PC-9 (cell line): ENCODE measurements at regions of chr1 and their contacts with region 1.

Region 1: DNA sequence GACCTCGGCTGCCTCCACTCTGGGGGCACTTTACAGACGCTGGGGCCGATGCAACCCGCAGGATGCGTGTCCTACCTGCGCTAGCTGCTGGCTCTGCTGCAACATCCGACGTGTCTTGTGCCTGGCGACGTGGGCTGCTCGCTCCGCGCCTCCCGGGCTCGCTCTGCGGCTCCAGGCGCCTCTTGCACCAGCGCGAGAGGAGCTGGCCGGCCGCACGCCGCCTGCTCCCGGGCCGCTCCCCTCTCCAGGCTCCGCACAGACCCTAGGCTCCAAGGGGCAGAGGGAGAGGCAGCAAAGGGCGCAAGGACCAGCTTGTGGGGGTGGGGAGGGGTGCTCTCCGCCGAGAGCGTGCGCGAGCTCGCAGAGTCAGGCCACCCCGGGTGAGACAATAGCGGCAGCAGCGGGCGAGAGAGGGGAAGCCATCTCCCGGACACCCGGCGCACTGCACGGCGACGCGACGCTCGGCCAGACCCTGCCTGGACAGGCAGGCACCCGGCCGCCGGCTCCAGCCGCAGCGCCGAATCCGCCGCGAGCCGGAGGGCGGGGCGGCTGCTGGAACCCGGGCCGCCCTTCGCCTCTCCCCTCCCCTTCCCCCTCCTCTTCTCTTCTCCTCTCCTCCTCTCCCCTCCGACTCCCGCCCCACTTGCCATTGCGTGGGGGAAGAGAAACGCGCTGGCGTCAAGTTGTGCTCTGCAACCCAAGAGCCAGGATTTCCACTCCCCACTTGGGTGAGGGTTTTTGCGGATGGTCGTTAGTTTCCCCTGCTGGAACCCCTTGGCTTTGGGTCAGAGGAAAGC is at the start of gene PIK3C2B:
- DNase-seq: peak; percentile 80 to 84
- H3K4me3 ChIP-seq: peak within 1 kb of the TSS; percentile 94
- H3K27ac ChIP-seq: peak within 1 kb of the TSS; percentile 92
- H3K4me1 ChIP-seq: peaks cover 34% of the 10 kb centered on the region
- H3K27me3 ChIP-seq: no peaks in the 10 kb centered on the region
- CTCF ChIP-seq: peak; percentile 55; the same call in 1 of the 2 replicates
- total RNA-seq, gene PIK3C2B: 51.6 and 52.4 TPM in 2 replicates

Region 2: DNA sequence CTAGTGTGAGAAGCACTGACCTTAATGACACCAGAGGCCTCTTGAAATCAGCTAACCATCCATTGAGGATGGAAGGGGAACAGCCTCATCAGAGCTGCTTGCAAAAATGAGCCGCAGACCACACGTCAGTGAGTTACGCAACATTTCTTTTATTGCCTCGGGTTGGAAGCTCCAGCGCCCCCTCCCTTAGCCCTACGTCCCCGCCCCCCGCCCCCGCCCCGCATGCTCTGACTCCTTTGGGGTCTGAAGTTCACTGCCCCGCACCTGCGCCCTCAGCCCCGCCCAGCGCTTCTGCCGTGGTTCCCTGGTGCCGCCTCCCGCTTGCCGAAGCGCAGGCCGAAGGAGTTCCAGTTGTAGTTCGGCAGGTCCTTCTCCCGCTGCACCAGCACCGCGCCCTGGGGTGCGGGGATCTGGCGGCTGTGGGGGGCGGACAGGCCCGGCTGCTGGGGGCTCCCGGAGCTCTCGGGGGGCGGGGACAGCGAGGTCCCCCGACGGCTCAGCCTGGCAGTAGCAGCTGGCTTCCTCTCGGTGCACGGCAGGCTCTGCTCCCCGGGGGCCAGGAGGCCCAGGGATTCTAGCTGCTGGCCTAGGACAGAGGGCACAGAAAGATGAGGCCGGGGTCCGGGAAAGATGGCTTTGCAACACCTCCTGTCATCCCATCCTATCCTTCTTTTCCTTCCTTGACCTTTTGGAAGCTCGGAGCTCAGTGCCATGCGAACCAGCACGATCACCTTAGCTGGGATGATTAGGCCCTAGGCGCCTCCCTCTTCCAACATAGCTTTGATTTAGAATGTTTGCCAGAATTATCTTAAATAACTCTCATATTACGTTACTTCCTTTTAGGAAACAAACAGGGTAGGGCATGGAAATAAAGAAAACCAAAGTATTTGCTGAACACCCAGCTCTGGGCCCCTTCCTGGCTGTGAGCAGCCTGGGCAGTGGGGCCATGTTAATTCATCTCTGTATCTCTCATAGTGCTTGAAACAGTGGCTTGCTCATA is 304.0 kb before region 1 on chr1:
- CTCF ChIA-PET with region 1: no interaction called
- POLR2A ChIA-PET with region 1: no interaction called
- intact Hi-C with region 1: no loop called
- DNase-seq: peak in 1 of 2 experiments; percentile 52
- H3K4me3 ChIP-seq: no peak overlapping the region
- H3K27ac ChIP-seq: no peak overlapping the region
- H3K4me1 ChIP-seq: peaks cover 20% of the 10 kb centered on the region
- H3K27me3 ChIP-seq: no peaks in the 10 kb centered on the region
- CTCF ChIP-seq: no peak

Region 3: DNA sequence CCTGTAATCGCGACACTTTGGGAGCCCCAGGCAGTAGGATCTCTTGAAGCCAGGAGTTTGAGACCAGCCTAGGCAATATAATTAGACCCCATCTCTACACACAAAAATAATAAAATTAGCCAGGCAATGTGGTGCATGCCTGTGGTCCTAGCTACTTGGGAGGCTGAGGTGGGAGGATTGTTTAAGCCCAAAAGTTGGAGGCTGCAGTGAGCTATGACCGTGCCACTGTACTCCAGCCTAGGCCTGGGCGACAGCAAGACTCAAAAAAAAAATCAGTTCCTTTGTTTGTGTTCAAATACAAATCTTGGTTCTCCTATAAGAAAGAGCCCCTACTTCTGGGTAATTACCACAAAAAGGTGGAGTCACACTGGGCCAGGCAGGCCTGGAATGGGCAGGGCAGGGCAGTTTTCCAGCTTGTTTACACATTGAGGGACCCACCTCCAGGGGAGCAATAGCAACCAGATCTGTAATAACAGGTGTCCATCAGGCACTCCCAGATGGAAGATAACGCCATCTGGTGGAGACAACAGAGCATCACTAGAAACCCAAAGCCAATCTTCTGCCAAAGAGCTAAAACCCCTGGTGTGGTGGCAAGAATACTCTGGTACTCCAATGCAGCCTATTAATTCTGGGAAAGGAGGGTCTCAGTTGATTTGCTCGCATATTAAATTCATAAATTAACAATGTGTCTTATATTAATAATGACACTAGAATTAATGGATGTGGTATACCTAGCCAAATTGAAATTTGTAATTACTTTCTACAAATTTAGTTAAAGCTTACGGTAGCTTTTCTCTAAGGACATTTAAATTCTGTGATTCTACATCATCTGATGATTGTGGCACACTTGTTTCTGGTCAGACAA is 96.0 kb before region 1 on chr1:
- CTCF ChIA-PET with region 1: interaction called, 10 read pairs
- POLR2A ChIA-PET with region 1: interaction called, 3 read pairs
- intact Hi-C with region 1: no loop called
- DNase-seq: peak; percentile 88 to 92
- H3K4me3 ChIP-seq: no peak overlapping the region
- H3K27ac ChIP-seq: no peak overlapping the region
- H3K4me1 ChIP-seq: 0 out of 2 replicates have a peak, but pooled peaks cover 5% of the 10 kb centered on the region
- H3K27me3 ChIP-seq: no peaks in the 10 kb centered on the region
- CTCF ChIP-seq: peak; percentile 87

Region 4: GRCh38 chr1:204417231-204417997 is 77.1 kb before region 1 on chr1:
- CTCF ChIA-PET with region 1: interaction called, 4 read pairs
- POLR2A ChIA-PET with region 1: interaction called, 16 read pairs
- intact Hi-C with region 1: no loop called
- DNase-seq: peak; percentile 77 to 96
- H3K4me3 ChIP-seq: peak overlapping the region; percentile 51
- H3K27ac ChIP-seq: peak overlapping the region; percentile 98
- H3K4me1 ChIP-seq: peaks cover 73% of the 10 kb centered on the region
- H3K27me3 ChIP-seq: no peaks in the 10 kb centered on the region
- CTCF ChIP-seq: no peak

Region 5: DNA sequence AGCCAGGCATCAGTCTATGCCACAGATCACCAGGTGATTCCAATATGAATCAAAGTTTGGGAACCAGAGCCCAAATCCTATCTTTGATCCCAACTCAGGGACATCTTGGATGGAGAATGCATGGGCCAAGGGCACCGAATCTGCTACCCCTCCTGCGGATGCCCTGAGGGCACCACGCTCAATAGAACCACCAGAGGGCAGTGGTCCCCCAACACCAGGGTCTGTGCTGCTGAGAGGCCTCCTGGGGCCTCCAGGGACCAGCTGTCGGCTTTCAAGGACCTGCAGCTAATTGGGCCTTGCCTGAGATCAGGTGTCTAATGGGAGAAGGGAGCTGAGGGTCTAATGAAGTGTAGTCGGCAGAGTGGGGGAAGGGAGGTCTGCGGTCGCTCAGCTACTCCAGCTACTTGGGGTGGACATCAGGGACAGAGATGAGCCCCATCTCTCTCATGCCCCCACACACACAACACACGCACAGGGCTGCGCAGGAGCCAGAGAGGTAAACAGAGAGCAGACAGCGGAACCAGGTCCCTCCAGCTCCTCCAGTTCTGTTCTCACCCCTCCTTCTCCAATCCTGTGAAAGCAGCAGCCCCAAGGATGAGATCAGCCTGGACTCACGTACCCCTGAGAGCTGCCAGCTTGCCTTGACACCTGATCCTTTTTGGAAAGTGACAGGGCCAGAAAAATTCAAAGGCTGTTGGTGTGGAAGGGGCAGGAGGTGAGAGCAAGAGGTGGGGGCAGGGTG is 47.9 kb before region 1 on chr1:
- CTCF ChIA-PET with region 1: interaction called, 27 read pairs
- POLR2A ChIA-PET with region 1: interaction called, 25 read pairs
- intact Hi-C with region 1: loop called (anchors 1 kb)
- DNase-seq: peak in 1 of 2 experiments; percentile 34
- H3K4me3 ChIP-seq: no peak overlapping the region
- H3K27ac ChIP-seq: no peak overlapping the region
- H3K4me1 ChIP-seq: peaks cover 73% of the 10 kb centered on the region
- H3K27me3 ChIP-seq: no peaks in the 10 kb centered on the region
- CTCF ChIP-seq: peak; percentile 57

Region 6: GRCh38 chr1:204480515-204480914 is 14.0 kb before region 1 on chr1:
- CTCF ChIA-PET with region 1: interaction called, 4 read pairs
- POLR2A ChIA-PET with region 1: interaction called, 23 read pairs
- intact Hi-C with region 1: loop called (anchors 2 kb)
- DNase-seq: no peak
- H3K4me3 ChIP-seq: no peak overlapping the region
- H3K27ac ChIP-seq: 0 out of 2 replicates have a peak overlapping the region, but pooled peaks have one; percentile 9
- H3K4me1 ChIP-seq: peaks cover 64% of the 10 kb centered on the region
- H3K27me3 ChIP-seq: no peaks in the 10 kb centered on the region
- CTCF ChIP-seq: no peak